ENCODE measurements at regions of chr21 and their contacts with region 1.

Region 1: GRCh38 chr21:44801468-44802395 is at the start of gene UBE2G2:
- DNase-seq: peak; percentile 93 to 97 (median 94)
- ATAC-seq: peak; percentile 91
- H3K4me3 ChIP-seq: peak within 1 kb of the TSS; percentile 83
- H3K27ac ChIP-seq: peak within 1 kb of the TSS; percentile 93
- H3K4me1 ChIP-seq: peaks cover 19 to 27% of the 10 kb centered on the region in 2 experiments
- H3K27me3 ChIP-seq: no peaks in the 10 kb centered on the region
- CTCF ChIP-seq: no peak
- EP300 ChIP-seq: no peak
- POLR2A ChIP-seq: peak; percentile 96
- RAD21 ChIP-seq: no peak
- polyA plus RNA-seq, gene UBE2G2: 47.5 to 74.3 TPM

Region 2: GRCh38 chr21:43949499-43950208 is 852.1 kb before region 1 on chr21:
- CTCF ChIA-PET with region 1: no interaction called
- POLR2A ChIA-PET with region 1: no interaction called
- in situ Hi-C with region 1: no loop called
- intact Hi-C with region 1: no loop called
- DNase-seq: peak in 1 of 4 experiments; percentile 36
- ATAC-seq: no peak; the same call in 2 of the 3 replicates
- H3K4me3 ChIP-seq: no peak overlapping the region
- H3K27ac ChIP-seq: no peak overlapping the region
- H3K4me1 ChIP-seq: peaks cover 11 to 51% of the 10 kb centered on the region in 2 experiments; a peak in 4 of 5 replicates
- H3K27me3 ChIP-seq: no peaks in the 10 kb centered on the region
- CTCF ChIP-seq: 0 out of 6 replicates have a peak, but pooled peaks of 1 of the 3 experiments have one; percentile 16
- EP300 ChIP-seq: no peak
- POLR2A ChIP-seq: no peak
- RAD21 ChIP-seq: no peak

Region 3: GRCh38 chr21:44817506-44817880 is 15.8 kb after region 1 on chr21:
- CTCF ChIA-PET with region 1: no interaction called
- POLR2A ChIA-PET with region 1: interaction called, 33 read pairs
- in situ Hi-C with region 1: no loop called
- intact Hi-C with region 1: no loop called
- DNase-seq: peak; percentile 96 to 99 (median 98)
- ATAC-seq: peak; percentile 96
- H3K4me3 ChIP-seq: peak overlapping the region; percentile 71
- H3K27ac ChIP-seq: peak overlapping the region; percentile 99; the same call in 2 of the 3 replicates
- H3K4me1 ChIP-seq: peaks cover 0 to 56% of the 10 kb centered on the region in 2 experiments; a peak in 4 of 5 replicates
- H3K27me3 ChIP-seq: no peaks in the 10 kb centered on the region
- CTCF ChIP-seq: peak in 2 of 3 experiments; percentile 13 to 16; a peak in 1 of 6 replicates
- EP300 ChIP-seq: no peak
- POLR2A ChIP-seq: no peak
- RAD21 ChIP-seq: peak in 1 of 2 experiments; percentile 20; a peak in 1 of 4 replicates

Region 4: GRCh38 chr21:44845399-44846223 is 43.9 kb after region 1 on chr21:
- CTCF ChIA-PET with region 1: interaction called, 3 read pairs
- POLR2A ChIA-PET with region 1: no interaction called
- in situ Hi-C with region 1: no loop called
- intact Hi-C with region 1: loop called (anchors 5 kb)
- DNase-seq: peak; percentile 88 to 97 (median 94)
- ATAC-seq: peak; percentile 90
- H3K4me3 ChIP-seq: peak overlapping the region; percentile 32
- H3K27ac ChIP-seq: no peak overlapping the region
- H3K4me1 ChIP-seq: peaks cover 15 to 47% of the 10 kb centered on the region in 2 experiments
- H3K27me3 ChIP-seq: peaks cover 9 to 25% of the 10 kb centered on the region in 2 experiments; a peak in 4 of 5 replicates
- CTCF ChIP-seq: peak; percentile 70 to 89 (median 78)
- EP300 ChIP-seq: no peak
- POLR2A ChIP-seq: peak; percentile 50; the same call in 1 of the 2 replicates
- RAD21 ChIP-seq: peak; percentile 52 to 67

Region 5: GRCh38 chr21:44873356-44874239 is 71.9 kb after region 1 on chr21 and contains the start of gene PTTG1IP:
- CTCF ChIA-PET with region 1: interaction called, 5 read pairs
- POLR2A ChIA-PET with region 1: interaction called, 5 read pairs
- in situ Hi-C with region 1: no loop called
- intact Hi-C with region 1: loop called (anchors 2 kb)
- DNase-seq: peak; percentile 100
- ATAC-seq: peak; percentile 85
- H3K4me3 ChIP-seq: peak within 1 kb of the TSS; percentile 67
- H3K27ac ChIP-seq: peak within 1 kb of the TSS; percentile 74
- H3K4me1 ChIP-seq: peaks cover 45 to 54% of the 10 kb centered on the region in 2 experiments
- H3K27me3 ChIP-seq: no peaks in the 10 kb centered on the region
- CTCF ChIP-seq: no peak
- EP300 ChIP-seq: no peak
- POLR2A ChIP-seq: peak; percentile 78
- RAD21 ChIP-seq: no peak; a peak in 1 of 4 replicates
- polyA plus RNA-seq, gene PTTG1IP: 5.0 to 9.2 TPM

Region 6: DNA sequence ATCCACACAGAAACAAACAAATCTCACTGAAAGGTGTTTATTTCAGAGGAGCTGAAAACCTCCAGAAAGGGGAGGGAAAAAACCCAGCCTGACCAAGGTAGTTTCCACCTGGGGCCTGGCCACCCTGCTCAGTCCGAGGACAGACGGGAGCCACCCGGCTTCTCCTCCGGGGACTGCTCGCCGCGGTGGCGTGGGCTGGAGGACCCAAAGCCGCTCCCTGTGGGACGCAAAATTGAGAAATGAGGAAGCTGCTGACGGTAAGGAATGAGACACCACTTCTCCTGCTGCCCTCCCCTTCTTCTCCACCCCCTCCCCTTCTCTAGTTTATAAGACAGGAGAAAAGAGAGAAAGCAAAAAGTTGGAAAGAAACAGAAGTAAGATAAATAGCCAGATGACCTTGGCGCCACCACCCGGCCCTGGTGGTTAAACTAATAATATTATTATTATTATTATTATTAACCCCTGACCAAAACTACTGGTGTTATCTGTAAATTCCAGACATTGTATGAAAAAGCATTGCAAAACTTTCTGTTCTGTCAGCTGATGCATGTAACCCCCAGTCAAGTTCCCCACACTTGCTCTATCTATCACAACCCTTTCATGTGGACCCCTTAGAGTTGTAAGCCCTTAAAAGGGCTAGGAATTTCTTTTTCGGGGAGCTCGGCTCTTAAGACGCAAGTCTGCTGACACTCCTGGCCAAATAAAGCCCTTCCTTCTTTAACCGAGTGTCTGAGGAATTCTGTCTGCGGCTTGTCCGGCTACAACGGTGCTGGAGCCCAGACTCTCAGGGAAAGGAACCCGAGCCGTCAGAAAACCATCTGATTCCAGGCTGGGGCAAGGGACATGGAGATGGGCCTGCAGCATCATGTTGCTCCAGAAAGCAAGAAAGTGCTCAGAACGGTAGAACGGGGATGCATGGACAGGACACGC is 106.5 kb after region 1 on chr21:
- CTCF ChIA-PET with region 1: interaction called, 5 read pairs
- POLR2A ChIA-PET with region 1: interaction called, 5 read pairs
- in situ Hi-C with region 1: no loop called
- intact Hi-C with region 1: loop called (anchors 2 kb)
- DNase-seq: peak in 3 of 4 experiments; percentile 41 to 53 (median 49)
- ATAC-seq: peak; percentile 7; the same call in 2 of the 3 replicates
- H3K4me3 ChIP-seq: no peak overlapping the region
- H3K27ac ChIP-seq: no peak overlapping the region
- H3K4me1 ChIP-seq: peaks cover 9 to 71% of the 10 kb centered on the region in 2 experiments; a peak in 3 of 5 replicates
- H3K27me3 ChIP-seq: peaks cover 33 to 66% of the 10 kb centered on the region in 2 experiments
- CTCF ChIP-seq: peak in 1 of 3 experiments; percentile 20; a peak in 1 of 6 replicates
- EP300 ChIP-seq: no peak
- POLR2A ChIP-seq: no peak
- RAD21 ChIP-seq: peak; percentile 5 to 32; a peak in 2 of 4 replicates

Region 7: DNA sequence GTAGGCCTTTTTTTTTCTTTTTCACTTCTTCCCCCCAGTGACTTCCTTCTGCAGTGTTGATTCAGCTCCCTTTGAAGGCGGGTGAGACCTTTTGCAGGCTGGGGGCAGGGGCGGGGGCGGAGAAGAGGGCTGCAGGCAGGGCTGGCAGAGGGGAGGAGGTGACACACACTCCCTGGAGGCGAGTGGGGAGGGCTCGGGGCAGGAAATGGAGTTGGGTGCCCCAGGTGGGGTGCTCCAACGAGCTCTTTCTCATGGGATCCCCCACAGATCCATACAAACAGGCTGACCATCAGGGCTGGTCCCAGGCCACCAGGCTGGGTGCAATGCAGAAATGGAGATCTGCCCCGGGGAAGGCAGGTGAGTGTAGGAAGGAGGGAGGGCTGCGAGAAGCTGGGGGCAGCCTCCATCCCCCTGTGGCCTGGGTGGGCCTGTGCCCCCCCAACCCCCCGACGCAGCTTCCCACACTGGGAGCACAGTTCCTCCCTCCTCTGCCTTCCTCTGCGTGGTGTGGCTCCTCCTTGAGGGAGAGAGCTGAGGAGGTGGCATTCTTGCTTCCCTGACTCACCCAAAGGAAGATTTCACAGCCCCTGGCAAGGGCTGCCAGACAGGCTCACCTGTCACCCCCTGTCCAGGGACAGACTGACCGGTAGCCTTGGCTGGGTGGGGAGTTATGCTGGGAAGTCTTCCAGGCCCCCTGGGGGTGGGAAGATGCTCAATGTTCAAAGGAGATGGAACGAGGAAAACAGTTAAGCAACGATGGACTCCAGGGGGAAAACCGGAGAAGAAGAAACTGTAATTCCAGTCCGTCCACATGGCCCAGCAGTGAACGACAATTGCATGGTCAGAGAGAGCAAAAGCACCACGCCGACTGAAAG is 126.1 kb after region 1 on chr21:
- CTCF ChIA-PET with region 1: interaction called, 5 read pairs
- POLR2A ChIA-PET with region 1: no interaction called
- in situ Hi-C with region 1: no loop called
- intact Hi-C with region 1: loop called (anchors 2 kb)
- DNase-seq: peak; percentile 58 to 72 (median 63)
- ATAC-seq: peak; percentile 31; the same call in 2 of the 3 replicates
- H3K4me3 ChIP-seq: no peak overlapping the region
- H3K27ac ChIP-seq: no peak overlapping the region
- H3K4me1 ChIP-seq: peaks cover 8 to 34% of the 10 kb centered on the region in 2 experiments; a peak in 4 of 5 replicates
- H3K27me3 ChIP-seq: peaks cover 31 to 53% of the 10 kb centered on the region in 2 experiments
- CTCF ChIP-seq: no peak
- EP300 ChIP-seq: no peak
- POLR2A ChIP-seq: no peak
- RAD21 ChIP-seq: no peak